GM10248 (cell line): ENCODE measurements at regions of chr18 and their contacts with region 1.

Region 1: DNA sequence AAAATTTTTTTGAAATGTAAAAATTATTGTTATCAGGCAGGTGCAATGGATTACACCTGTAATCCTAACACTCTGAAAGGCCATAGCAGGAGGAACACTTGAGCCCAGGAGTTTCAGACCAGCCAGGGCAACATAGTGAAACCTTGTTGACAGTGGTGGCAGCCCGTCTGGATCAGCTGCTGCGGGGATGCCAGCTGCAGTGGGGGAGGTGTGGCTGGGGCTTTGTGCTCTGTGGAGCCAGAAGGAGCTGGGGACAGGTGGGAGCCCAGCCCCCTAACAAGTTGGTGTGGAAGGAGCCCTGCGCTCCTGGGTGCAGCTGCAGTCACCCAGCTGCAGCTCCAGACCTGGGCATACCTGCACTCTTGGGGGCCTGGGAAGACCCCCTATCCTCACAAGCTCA is 182.4 kb upstream of the MC4R start:
- DNase-seq: no peak
- CTCF ChIP-seq: no peak

Region 2: GRCh38 chr18:60568220-60568619 is 13.3 kb after region 1 on chr18:
- CTCF ChIA-PET with region 1: interaction called, 12 read pairs
- POLR2A ChIA-PET with region 1: no interaction called
- DNase-seq: no peak
- CTCF ChIP-seq: no peak